Endothelial cell of umbilical vein (primary cell): ENCODE measurements at regions of chr13 and their contacts with region 1.

Region 1: GRCh38 chr13:40069173-40070044 is 413.9 kb downstream of the COG6 start:
- DNase-seq: peak; percentile 69
- H3K4me3 ChIP-seq: no peak overlapping the region
- H3K27ac ChIP-seq: no peak overlapping the region
- H3K4me1 ChIP-seq: peaks cover 5% of the 10 kb centered on the region
- H3K27me3 ChIP-seq: no peaks in the 10 kb centered on the region
- CTCF ChIP-seq: peak; percentile 69 to 82
- POLR2A ChIP-seq: no peak

Region 2: DNA sequence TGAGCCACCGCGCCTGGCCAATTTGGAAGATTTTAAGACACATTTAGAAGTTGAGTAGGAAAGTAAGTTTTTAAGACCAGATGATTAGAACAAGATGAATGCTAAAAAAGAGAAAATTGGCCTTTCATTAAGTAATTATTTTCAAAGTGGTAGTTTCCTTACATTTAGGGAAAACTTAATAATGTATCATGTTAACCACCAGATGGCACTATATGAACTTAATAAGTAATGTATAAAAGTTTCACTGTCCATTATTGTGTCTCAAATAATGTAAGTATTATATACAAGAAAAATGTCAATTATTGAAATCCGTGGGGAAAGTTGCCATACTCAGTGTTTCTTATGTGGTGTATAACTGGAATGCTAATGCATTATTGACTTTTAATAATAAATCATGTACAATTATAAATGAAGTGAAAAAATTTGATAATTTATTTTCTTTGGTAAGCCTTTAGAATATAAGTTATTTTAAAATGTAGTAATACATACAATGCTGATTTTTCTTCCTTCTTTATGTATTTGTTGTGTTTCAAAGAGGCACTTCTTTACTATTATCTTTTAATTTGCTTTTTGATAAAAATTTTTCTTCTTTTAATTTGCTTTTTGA is 384.8 kb before region 1 on chr13:
- CTCF ChIA-PET with region 1: interaction called, 6 read pairs
- POLR2A ChIA-PET with region 1: no interaction called
- dilution Hi-C with region 1: no loop called
- intact Hi-C with region 1: loop called (anchors 1 kb)
- DNase-seq: peak; percentile 54
- H3K4me3 ChIP-seq: no peak overlapping the region
- H3K27ac ChIP-seq: no peak overlapping the region
- H3K4me1 ChIP-seq: no peaks in the 10 kb centered on the region
- H3K27me3 ChIP-seq: no peaks in the 10 kb centered on the region
- CTCF ChIP-seq: peak in 1 of 2 donors; percentile 8
- POLR2A ChIP-seq: no peak

Region 3: DNA sequence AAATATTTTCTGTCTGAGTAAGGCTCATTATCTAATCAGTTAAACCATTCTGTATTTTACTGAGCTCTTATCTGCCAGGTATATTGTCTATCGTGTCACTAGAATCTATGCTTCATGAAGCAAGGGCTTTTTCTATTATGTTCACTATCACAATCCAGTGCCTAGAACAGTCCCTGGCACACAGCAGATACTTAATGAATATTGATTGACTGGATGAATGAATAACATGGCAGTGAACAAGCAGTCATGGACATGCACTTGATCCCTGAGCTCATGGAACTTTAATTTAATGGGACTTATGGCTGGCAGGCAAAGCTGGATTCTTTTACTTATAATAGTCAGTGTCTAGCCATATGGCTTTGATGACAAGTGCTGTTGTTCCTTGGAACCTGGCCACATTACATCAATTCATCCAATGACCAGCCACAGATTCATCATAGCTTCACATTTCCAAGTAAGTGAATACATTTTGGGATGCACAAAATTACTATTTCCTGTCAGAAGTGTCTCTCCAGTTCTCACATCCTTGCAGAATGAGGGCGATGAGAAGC is 199.1 kb before region 1 on chr13:
- CTCF ChIA-PET with region 1: no interaction called
- POLR2A ChIA-PET with region 1: no interaction called
- dilution Hi-C with region 1: no loop called
- intact Hi-C with region 1: no loop called
- DNase-seq: no peak
- H3K4me3 ChIP-seq: no peak overlapping the region
- H3K27ac ChIP-seq: no peak overlapping the region
- H3K4me1 ChIP-seq: peaks cover 23% of the 10 kb centered on the region
- H3K27me3 ChIP-seq: no peaks in the 10 kb centered on the region
- CTCF ChIP-seq: no peak
- POLR2A ChIP-seq: no peak

Region 4: DNA sequence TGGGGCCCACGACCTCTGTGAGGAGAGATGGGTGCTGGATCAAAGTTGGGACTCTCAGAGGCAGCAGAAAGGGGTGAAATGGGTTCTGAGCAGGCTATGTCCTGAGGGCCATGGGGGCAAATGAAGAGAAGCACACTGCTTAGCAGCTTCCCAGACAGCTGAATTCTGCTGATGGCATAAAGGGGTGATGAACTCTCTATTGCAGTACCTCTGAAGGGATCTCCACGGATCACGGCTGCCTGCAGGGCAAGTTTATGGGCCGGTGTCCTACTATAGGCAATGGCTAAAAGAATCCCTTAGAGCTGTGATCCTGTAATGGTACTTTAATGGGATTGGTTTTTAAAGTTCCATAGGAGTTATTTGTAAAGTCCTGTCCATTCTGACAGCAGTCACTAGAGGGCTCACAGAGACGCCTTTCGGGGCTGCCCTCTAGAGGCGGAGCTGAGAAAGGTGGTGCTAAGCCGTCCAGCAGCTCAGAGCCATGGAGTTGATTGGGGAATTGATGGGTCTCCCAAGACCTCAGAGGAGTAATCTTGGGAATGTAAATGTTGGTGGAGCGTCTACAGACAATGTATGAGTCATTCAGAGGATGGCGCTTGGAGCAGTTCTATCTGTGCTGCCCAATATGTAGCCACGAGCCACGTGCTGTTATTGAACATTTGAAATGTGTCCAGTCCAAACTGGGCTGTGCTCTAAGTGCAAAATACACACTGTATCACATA is 126.7 kb before region 1 on chr13:
- CTCF ChIA-PET with region 1: interaction called, 12 read pairs
- POLR2A ChIA-PET with region 1: no interaction called
- dilution Hi-C with region 1: no loop called
- intact Hi-C with region 1: no loop called
- DNase-seq: peak; percentile 71
- H3K4me3 ChIP-seq: no peak overlapping the region
- H3K27ac ChIP-seq: no peak overlapping the region
- H3K4me1 ChIP-seq: peaks cover 3% of the 10 kb centered on the region
- H3K27me3 ChIP-seq: no peaks in the 10 kb centered on the region
- CTCF ChIP-seq: peak; percentile 86 to 94
- POLR2A ChIP-seq: no peak

Region 5: GRCh38 chr13:40503966-40504591 is 434.7 kb after region 1 on chr13:
- CTCF ChIA-PET with region 1: interaction called, 6 read pairs
- POLR2A ChIA-PET with region 1: no interaction called
- dilution Hi-C with region 1: no loop called
- intact Hi-C with region 1: loop called (anchors 1 kb)
- DNase-seq: peak; percentile 99
- H3K4me3 ChIP-seq: no peak overlapping the region
- H3K27ac ChIP-seq: peak overlapping the region; percentile 99
- H3K4me1 ChIP-seq: peaks cover 51% of the 10 kb centered on the region
- H3K27me3 ChIP-seq: no peaks in the 10 kb centered on the region
- CTCF ChIP-seq: no peak
- POLR2A ChIP-seq: peak; percentile 74

Region 6: GRCh38 chr13:40549500-40550094 is 480.2 kb after region 1 on chr13:
- CTCF ChIA-PET with region 1: interaction called, 6 read pairs
- POLR2A ChIA-PET with region 1: no interaction called
- dilution Hi-C with region 1: no loop called
- intact Hi-C with region 1: loop called (anchors 10 kb)
- DNase-seq: no peak
- H3K4me3 ChIP-seq: no peak overlapping the region
- H3K27ac ChIP-seq: no peak overlapping the region
- H3K4me1 ChIP-seq: no peaks in the 10 kb centered on the region
- H3K27me3 ChIP-seq: no peaks in the 10 kb centered on the region
- CTCF ChIP-seq: no peak
- POLR2A ChIP-seq: no peak

Region 7: GRCh38 chr13:40770934-40771618 is 701.7 kb after region 1 on chr13 and contains the start of gene MRPS31:
- CTCF ChIA-PET with region 1: no interaction called
- POLR2A ChIA-PET with region 1: no interaction called
- dilution Hi-C with region 1: no loop called
- intact Hi-C with region 1: loop called (anchors 10 kb)
- DNase-seq: peak; percentile 93
- H3K4me3 ChIP-seq: peak within 1 kb of the TSS; percentile 71 to 91 (median 77)
- H3K27ac ChIP-seq: peak within 1 kb of the TSS; percentile 75
- H3K4me1 ChIP-seq: peaks cover 6% of the 10 kb centered on the region
- H3K27me3 ChIP-seq: no peaks in the 10 kb centered on the region
- CTCF ChIP-seq: no peak
- POLR2A ChIP-seq: peak; percentile 88
- total RNA-seq, gene MRPS31: 17.8 and 19.9 TPM in 2 replicates